Sigmoid colon (tissue), 7 donors: ENCODE measurements at regions of chr22 and their contacts with region 1.

Region 1: GRCh38 chr22:17903564-17904295 is 120.6 kb downstream of the MICAL3 start:
- DNase-seq: no peak
- H3K4me3 ChIP-seq: no peak overlapping the region
- H3K27ac ChIP-seq: peak overlapping the region; percentile 30 to 77 (median 67)
- H3K4me1 ChIP-seq: peaks cover 0 to 32% (median 25%) of the 10 kb centered on the region in 4 donors
- H3K27me3 ChIP-seq: no peaks in the 10 kb centered on the region
- CTCF ChIP-seq: no peak
- EP300 ChIP-seq: no peak
- POLR2A ChIP-seq: no peak

Region 2: GRCh38 chr22:17945888-17946648 is 42.3 kb after region 1 on chr22:
- intact Hi-C with region 1: loop called (anchors 5 kb)
- DNase-seq: peak; percentile 54
- H3K4me3 ChIP-seq: no peak overlapping the region
- H3K27ac ChIP-seq: peak overlapping the region; percentile 65 to 83 (median 78)
- H3K4me1 ChIP-seq: peaks cover 0 to 84% (median 64%) of the 10 kb centered on the region in 4 donors
- H3K27me3 ChIP-seq: no peaks in the 10 kb centered on the region
- CTCF ChIP-seq: no peak
- EP300 ChIP-seq: no peak
- POLR2A ChIP-seq: no peak

Region 3: GRCh38 chr22:18070556-18071306 is 167.0 kb after region 1 on chr22:
- intact Hi-C with region 1: loop called (anchors 5 kb)
- DNase-seq: no peak
- H3K4me3 ChIP-seq: no peak overlapping the region
- H3K27ac ChIP-seq: peak overlapping the region in 1 of 4 donors; percentile 95
- H3K4me1 ChIP-seq: peaks cover 0 to 49% (median 41%) of the 10 kb centered on the region in 4 donors
- H3K27me3 ChIP-seq: no peaks in the 10 kb centered on the region
- CTCF ChIP-seq: no peak
- EP300 ChIP-seq: no peak
- POLR2A ChIP-seq: no peak